ENCODE measurements at regions of chr2 and their contacts with region 1.

Region 1: GRCh38 chr2:226649871-226650660 is 149.6 kb downstream of the IRS1 start:
- DNase-seq: peak; percentile 41 to 84
- ATAC-seq: peak; percentile 90 to 98 (median 95)
- H3K4me3 ChIP-seq: peak overlapping the region in 3 of 10 donors; percentile 3 to 24 (median 20)
- H3K27ac ChIP-seq: peak overlapping the region; percentile 41 to 89 (median 74)
- H3K4me1 ChIP-seq: peaks cover 9 to 38% (median 24%) of the 10 kb centered on the region in 9 donors
- H3K27me3 ChIP-seq: peaks cover 0 to 42% (median 6%) of the 10 kb centered on the region in 7 donors
- CTCF ChIP-seq: no peak

Region 2: DNA sequence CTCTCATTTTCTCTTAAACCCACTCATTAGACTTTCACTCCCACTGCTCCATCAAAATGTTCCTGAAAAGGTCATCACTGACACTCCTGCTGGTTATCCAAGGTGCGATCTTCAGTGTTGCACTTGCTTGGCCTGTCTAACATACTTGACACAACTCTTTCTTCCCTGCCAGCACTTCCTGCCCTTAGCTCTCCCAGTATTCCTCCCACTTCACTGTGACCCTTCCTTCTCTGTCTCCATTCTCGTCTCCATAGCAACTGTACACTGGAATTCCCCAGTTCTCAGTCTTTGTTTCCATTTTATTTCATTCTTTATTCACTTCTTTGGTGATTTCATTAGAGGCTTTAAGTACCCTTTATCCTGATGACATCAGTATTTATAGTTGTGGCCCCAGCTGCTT is 183.5 kb before region 1 on chr2:
- intact Hi-C with region 1: no loop called
- DNase-seq: no peak
- ATAC-seq: no peak
- H3K4me3 ChIP-seq: no peak overlapping the region
- H3K27ac ChIP-seq: no peak overlapping the region
- H3K4me1 ChIP-seq: peaks cover 0 to 9% (median 3%) of the 10 kb centered on the region in 9 donors
- H3K27me3 ChIP-seq: no peaks in the 10 kb centered on the region
- CTCF ChIP-seq: no peak

Region 3: DNA sequence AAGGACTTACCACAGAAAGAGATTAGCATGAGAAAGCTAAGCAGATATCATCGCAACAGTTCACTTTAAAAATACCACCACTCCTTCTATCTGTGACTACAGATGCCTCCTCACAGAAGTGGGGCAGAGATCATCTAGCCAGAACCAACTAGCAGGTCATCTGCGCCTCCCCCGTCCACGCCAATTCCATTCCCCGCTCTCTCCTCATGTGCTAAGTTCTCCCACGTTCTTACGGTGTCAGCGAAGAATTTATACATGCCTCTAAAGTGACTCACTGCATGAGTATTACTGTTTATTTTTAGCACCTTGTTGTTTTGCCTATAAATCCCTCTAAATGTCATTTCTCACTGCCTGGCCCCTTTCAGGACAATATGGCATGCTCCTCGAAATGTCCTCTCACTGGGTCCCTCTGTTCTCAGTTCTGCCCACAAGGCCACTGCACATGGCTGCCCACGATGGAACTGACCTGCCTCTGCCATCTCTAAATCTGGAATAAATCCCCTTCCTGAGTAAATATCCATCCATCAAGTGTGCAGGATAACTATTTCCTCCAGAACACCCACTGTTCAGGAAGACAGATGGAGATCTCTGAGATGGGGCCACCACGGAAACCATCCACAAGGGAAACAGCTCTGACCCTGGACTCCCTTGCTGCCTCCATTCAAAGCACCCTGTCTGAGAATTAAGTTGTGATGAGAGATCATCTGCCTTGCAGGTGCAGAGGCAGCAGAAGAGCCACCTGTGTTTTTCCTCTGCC is 11.9 kb after region 1 on chr2:
- intact Hi-C with region 1: no loop called
- DNase-seq: peak; percentile 31 to 55
- ATAC-seq: peak; percentile 61 to 90 (median 80)
- H3K4me3 ChIP-seq: no peak overlapping the region
- H3K27ac ChIP-seq: peak overlapping the region in 9 of 10 donors; percentile 45 to 77 (median 62)
- H3K4me1 ChIP-seq: peaks cover 7 to 47% (median 34%) of the 10 kb centered on the region in 9 donors
- H3K27me3 ChIP-seq: peaks cover 0 to 13% (median 0%) of the 10 kb centered on the region in 7 donors
- CTCF ChIP-seq: no peak

Region 4: GRCh38 chr2:226690461-226691024 is 40.5 kb after region 1 on chr2:
- intact Hi-C with region 1: loop called in 1 of 10 experiments (anchors 5 kb)
- DNase-seq: peak in 1 of 2 donors; percentile 39
- ATAC-seq: peak; percentile 68 to 87 (median 80)
- H3K4me3 ChIP-seq: peak overlapping the region in 5 of 10 donors; percentile 6 to 32 (median 25)
- H3K27ac ChIP-seq: peak overlapping the region in 9 of 10 donors; percentile 19 to 82 (median 62)
- H3K4me1 ChIP-seq: peaks cover 12 to 56% (median 35%) of the 10 kb centered on the region in 9 donors
- H3K27me3 ChIP-seq: no peaks in the 10 kb centered on the region
- CTCF ChIP-seq: no peak

Region 5: GRCh38 chr2:226721541-226721940 is 71.5 kb after region 1 on chr2:
- intact Hi-C with region 1: loop called in 2 of 10 experiments (anchors 10 kb)
- DNase-seq: peak; percentile 41
- ATAC-seq: peak in 1 of 8 donors; percentile 6
- H3K4me3 ChIP-seq: no peak overlapping the region
- H3K27ac ChIP-seq: no peak overlapping the region
- H3K4me1 ChIP-seq: peaks cover 3 to 34% (median 26%) of the 10 kb centered on the region in 9 donors
- H3K27me3 ChIP-seq: no peaks in the 10 kb centered on the region
- CTCF ChIP-seq: no peak

Region 6: GRCh38 chr2:227528803-227529202 is 878.7 kb after region 1 on chr2:
- intact Hi-C with region 1: no loop called
- DNase-seq: no peak
- ATAC-seq: no peak
- H3K4me3 ChIP-seq: no peak overlapping the region
- H3K27ac ChIP-seq: no peak overlapping the region
- H3K4me1 ChIP-seq: no peaks in the 10 kb centered on the region
- H3K27me3 ChIP-seq: no peaks in the 10 kb centered on the region
- CTCF ChIP-seq: no peak

Measured in heart right ventricle (tissue), 16 donors.